CD8-positive, alpha-beta T cell (primary cell): ENCODE measurements at regions of chr11 and their contacts with region 1.

Region 1: GRCh38 chr11:43975629-43976028 is 33.2 kb downstream of the C11orf96 start:
- DNase-seq: no peak
- ATAC-seq: no peak
- H3K4me3 ChIP-seq: no peak overlapping the region
- H3K4me3 Mint-ChIP-seq: no peak overlapping the region
- H3K27ac ChIP-seq: no peak overlapping the region
- H3K27ac Mint-ChIP-seq: no peak overlapping the region
- H3K4me1 ChIP-seq: no peaks in the 10 kb centered on the region
- H3K4me1 Mint-ChIP-seq: no peaks in the 10 kb centered on the region
- H3K27me3 ChIP-seq: no peaks in the 10 kb centered on the region
- H3K27me3 Mint-ChIP-seq: peaks cover 20% of the 10 kb centered on the region
- CTCF ChIP-seq: no peak

Region 2: GRCh38 chr11:43747130-43747802 is 228.4 kb before region 1 on chr11:
- CTCF ChIA-PET with region 1: no interaction called
- POLR2A ChIA-PET with region 1: no interaction called
- intact Hi-C with region 1: no loop called
- DNase-seq: no peak
- ATAC-seq: no peak
- H3K4me3 ChIP-seq: no peak overlapping the region
- H3K4me3 Mint-ChIP-seq: no peak overlapping the region
- H3K27ac ChIP-seq: no peak overlapping the region
- H3K27ac Mint-ChIP-seq: no peak overlapping the region
- H3K4me1 ChIP-seq: no peaks in the 10 kb centered on the region
- H3K4me1 Mint-ChIP-seq: no peaks in the 10 kb centered on the region
- H3K27me3 ChIP-seq: no peaks in the 10 kb centered on the region
- H3K27me3 Mint-ChIP-seq: no peaks in the 10 kb centered on the region
- CTCF ChIP-seq: no peak

Region 3: GRCh38 chr11:43920598-43921419 is 54.8 kb before region 1 on chr11:
- CTCF ChIA-PET with region 1: no interaction called
- POLR2A ChIA-PET with region 1: no interaction called
- intact Hi-C with region 1: no loop called
- DNase-seq: peak in 1 of 9 experiments; percentile 9
- ATAC-seq: no peak
- H3K4me3 ChIP-seq: no peak overlapping the region
- H3K4me3 Mint-ChIP-seq: no peak overlapping the region
- H3K27ac ChIP-seq: no peak overlapping the region
- H3K27ac Mint-ChIP-seq: no peak overlapping the region
- H3K4me1 ChIP-seq: no peaks in the 10 kb centered on the region
- H3K4me1 Mint-ChIP-seq: no peaks in the 10 kb centered on the region
- H3K27me3 ChIP-seq: no peaks in the 10 kb centered on the region
- H3K27me3 Mint-ChIP-seq: no peaks in the 10 kb centered on the region
- CTCF ChIP-seq: no peak

Region 4: GRCh38 chr11:43937434-43938411 is 37.9 kb before region 1 on chr11:
- CTCF ChIA-PET with region 1: no interaction called
- POLR2A ChIA-PET with region 1: no interaction called
- intact Hi-C with region 1: no loop called
- DNase-seq: no peak
- ATAC-seq: no peak
- H3K4me3 ChIP-seq: no peak overlapping the region
- H3K4me3 Mint-ChIP-seq: no peak overlapping the region
- H3K27ac ChIP-seq: no peak overlapping the region
- H3K27ac Mint-ChIP-seq: no peak overlapping the region
- H3K4me1 ChIP-seq: no peaks in the 10 kb centered on the region
- H3K4me1 Mint-ChIP-seq: peaks cover 5% of the 10 kb centered on the region
- H3K27me3 ChIP-seq: peaks cover 0 to 2% of the 10 kb centered on the region in 2 experiments
- H3K27me3 Mint-ChIP-seq: peaks cover 35% of the 10 kb centered on the region
- CTCF ChIP-seq: no peak

Region 5: GRCh38 chr11:44008088-44008501 is 32.5 kb after region 1 on chr11:
- CTCF ChIA-PET with region 1: no interaction called
- POLR2A ChIA-PET with region 1: no interaction called
- intact Hi-C with region 1: loop called in 1 of 2 experiments (anchors 2 kb)
- DNase-seq: no peak
- ATAC-seq: no peak
- H3K4me3 ChIP-seq: no peak overlapping the region
- H3K4me3 Mint-ChIP-seq: no peak overlapping the region
- H3K27ac ChIP-seq: no peak overlapping the region
- H3K27ac Mint-ChIP-seq: no peak overlapping the region
- H3K4me1 ChIP-seq: no peaks in the 10 kb centered on the region
- H3K4me1 Mint-ChIP-seq: no peaks in the 10 kb centered on the region
- H3K27me3 ChIP-seq: no peaks in the 10 kb centered on the region
- H3K27me3 Mint-ChIP-seq: no peaks in the 10 kb centered on the region
- CTCF ChIP-seq: no peak